CD8-positive, alpha-beta T cell (primary cell): ENCODE measurements at regions of chr2 and their contacts with region 1.

Region 1: GRCh38 chr2:157395811-157396210 is 48.1 kb downstream of the CYTIP start:
- DNase-seq: no peak
- ATAC-seq: peak; percentile 14
- H3K4me3 ChIP-seq: no peak overlapping the region
- H3K4me3 Mint-ChIP-seq: no peak overlapping the region
- H3K27ac ChIP-seq: no peak overlapping the region
- H3K27ac Mint-ChIP-seq: no peak overlapping the region
- H3K4me1 ChIP-seq: no peaks in the 10 kb centered on the region
- H3K4me1 Mint-ChIP-seq: peaks cover 4% of the 10 kb centered on the region
- H3K27me3 ChIP-seq: no peaks in the 10 kb centered on the region
- H3K27me3 Mint-ChIP-seq: no peaks in the 10 kb centered on the region
- CTCF ChIP-seq: no peak

Region 2: GRCh38 chr2:156573710-156574109 is 822.1 kb before region 1 on chr2:
- CTCF ChIA-PET with region 1: no interaction called
- POLR2A ChIA-PET with region 1: no interaction called
- intact Hi-C with region 1: no loop called
- DNase-seq: no peak
- ATAC-seq: no peak
- H3K4me3 ChIP-seq: no peak overlapping the region
- H3K4me3 Mint-ChIP-seq: no peak overlapping the region
- H3K27ac ChIP-seq: no peak overlapping the region
- H3K27ac Mint-ChIP-seq: no peak overlapping the region
- H3K4me1 ChIP-seq: no peaks in the 10 kb centered on the region
- H3K4me1 Mint-ChIP-seq: peaks cover 1% of the 10 kb centered on the region
- H3K27me3 ChIP-seq: no peaks in the 10 kb centered on the region
- H3K27me3 Mint-ChIP-seq: no peaks in the 10 kb centered on the region
- CTCF ChIP-seq: no peak

Region 3: DNA sequence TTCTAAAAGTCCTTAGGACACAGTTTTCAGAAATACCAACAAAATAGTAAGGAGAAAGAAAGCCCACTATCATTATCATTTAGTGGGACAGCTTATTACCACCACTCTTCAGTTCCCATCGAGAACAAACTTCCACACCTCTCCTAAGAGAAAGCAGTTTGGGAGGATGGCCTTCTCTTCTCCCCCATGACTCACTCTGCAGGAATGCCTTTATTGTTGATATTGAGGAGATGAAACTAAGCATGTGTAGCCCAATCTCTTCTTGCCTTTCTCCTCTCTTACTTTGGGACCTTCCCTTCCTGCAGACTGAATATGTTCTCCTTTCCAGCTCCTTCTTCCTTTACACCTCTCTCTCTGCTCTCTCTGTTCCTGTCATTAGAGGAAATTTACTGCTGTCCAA is 40.2 kb before region 1 on chr2:
- CTCF ChIA-PET with region 1: interaction called, 4 read pairs
- POLR2A ChIA-PET with region 1: no interaction called
- intact Hi-C with region 1: loop called in 1 of 2 experiments (anchors 2 kb)
- DNase-seq: no peak
- ATAC-seq: no peak
- H3K4me3 ChIP-seq: no peak overlapping the region
- H3K4me3 Mint-ChIP-seq: no peak overlapping the region
- H3K27ac ChIP-seq: no peak overlapping the region
- H3K27ac Mint-ChIP-seq: no peak overlapping the region
- H3K4me1 ChIP-seq: peaks cover 7% of the 10 kb centered on the region
- H3K4me1 Mint-ChIP-seq: peaks cover 51% of the 10 kb centered on the region
- H3K27me3 ChIP-seq: no peaks in the 10 kb centered on the region
- H3K27me3 Mint-ChIP-seq: no peaks in the 10 kb centered on the region
- CTCF ChIP-seq: no peak

Region 4: GRCh38 chr2:157822993-157823392 is 427.2 kb after region 1 on chr2:
- CTCF ChIA-PET with region 1: no interaction called
- POLR2A ChIA-PET with region 1: no interaction called
- intact Hi-C with region 1: no loop called
- DNase-seq: no peak
- ATAC-seq: no peak
- H3K4me3 ChIP-seq: no peak overlapping the region
- H3K4me3 Mint-ChIP-seq: no peak overlapping the region
- H3K27ac ChIP-seq: no peak overlapping the region
- H3K27ac Mint-ChIP-seq: no peak overlapping the region
- H3K4me1 ChIP-seq: no peaks in the 10 kb centered on the region
- H3K4me1 Mint-ChIP-seq: no peaks in the 10 kb centered on the region
- H3K27me3 ChIP-seq: no peaks in the 10 kb centered on the region
- H3K27me3 Mint-ChIP-seq: no peaks in the 10 kb centered on the region
- CTCF ChIP-seq: no peak